H1 (cell line): ENCODE measurements at regions of chr12 and their contacts with region 1.

Region 1: GRCh38 chr12:120429368-120429767 is 8.5 kb upstream of the COX6A1 start:
- DNase-seq: no peak
- H3K4me3 ChIP-seq: no peak overlapping the region
- H3K27ac ChIP-seq: no peak overlapping the region
- H3K4me1 ChIP-seq: peaks cover 0 to 6% (median 0%) of the 10 kb centered on the region in 4 experiments; a peak in 1 of 7 replicates
- H3K27me3 ChIP-seq: no peaks in the 10 kb centered on the region
- CTCF ChIP-seq: no peak
- EP300 ChIP-seq: no peak
- POLR2A ChIP-seq: no peak
- RAD21 ChIP-seq: no peak

Region 2: GRCh38 chr12:120265473-120266179 is 163.7 kb before region 1 on chr12 and contains the start of gene PXN:
- CTCF ChIA-PET with region 1: interaction called, 10 read pairs
- POLR2A ChIA-PET with region 1: no interaction called
- DNase-seq: peak in 1 of 2 experiments; percentile 97
- H3K4me3 ChIP-seq: peak within 1 kb of the TSS; percentile 65 to 85 (median 80)
- H3K27ac ChIP-seq: peak within 1 kb of the TSS; percentile 83
- H3K4me1 ChIP-seq: peaks cover 15 to 29% (median 19%) of the 10 kb centered on the region in 4 experiments
- H3K27me3 ChIP-seq: no peaks in the 10 kb centered on the region
- CTCF ChIP-seq: peak; percentile 79 to 91 (median 91)
- EP300 ChIP-seq: no peak
- POLR2A ChIP-seq: peak in 1 of 2 experiments; percentile 70; a peak in 2 of 3 replicates
- RAD21 ChIP-seq: peak; percentile 87 to 91
- total RNA-seq, gene PXN: 105 and 109 TPM in 2 replicates

Region 3: DNA sequence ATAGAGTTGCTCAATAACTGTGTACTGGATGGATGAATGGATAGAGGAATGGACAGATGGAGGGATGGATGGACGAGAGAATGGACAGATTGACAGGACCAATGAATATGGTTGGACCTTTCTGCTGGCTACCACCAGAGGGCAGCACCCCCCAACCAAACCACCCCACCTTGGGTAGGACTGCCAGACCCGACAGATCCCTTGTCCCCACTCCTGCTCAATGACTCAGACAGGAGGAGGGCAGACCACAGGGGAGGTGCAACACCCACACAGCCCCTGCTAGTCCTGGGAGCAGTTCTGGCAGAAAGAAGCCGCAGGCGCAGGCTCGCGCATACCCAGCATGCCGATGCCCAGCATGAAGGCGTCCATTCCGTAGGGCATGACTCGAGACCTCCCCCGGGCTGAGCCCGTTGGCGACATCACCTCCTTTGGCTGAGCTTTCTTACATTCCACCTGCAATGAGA is 72.8 kb before region 1 on chr12:
- CTCF ChIA-PET with region 1: interaction called, 310 read pairs
- POLR2A ChIA-PET with region 1: interaction called, 8 read pairs
- DNase-seq: peak; percentile 80 to 90
- H3K4me3 ChIP-seq: no peak overlapping the region
- H3K27ac ChIP-seq: no peak overlapping the region
- H3K4me1 ChIP-seq: peaks cover 8 to 16% (median 13%) of the 10 kb centered on the region in 4 experiments
- H3K27me3 ChIP-seq: no peaks in the 10 kb centered on the region
- CTCF ChIP-seq: peak; percentile 91 to 94 (median 93)
- EP300 ChIP-seq: no peak
- POLR2A ChIP-seq: no peak
- RAD21 ChIP-seq: peak; percentile 93 to 96

Region 4: GRCh38 chr12:120388691-120389481 is 40.5 kb before region 1 on chr12:
- CTCF ChIA-PET with region 1: interaction called, 31 read pairs
- POLR2A ChIA-PET with region 1: interaction called, 3 read pairs
- DNase-seq: peak; percentile 71 to 88
- H3K4me3 ChIP-seq: peak overlapping the region; percentile 7 to 42 (median 19); a peak in 5 of 8 replicates
- H3K27ac ChIP-seq: peak overlapping the region; percentile 53; the same call in 1 of the 2 replicates
- H3K4me1 ChIP-seq: peaks cover under 1 to 21% (median 9%) of the 10 kb centered on the region in 4 experiments
- H3K27me3 ChIP-seq: no peaks in the 10 kb centered on the region
- CTCF ChIP-seq: no peak
- EP300 ChIP-seq: peak in 1 of 2 experiments; percentile 43; a peak in 1 of 3 replicates
- POLR2A ChIP-seq: peak in 1 of 2 experiments; percentile 50; a peak in 2 of 3 replicates
- RAD21 ChIP-seq: no peak

Region 5: GRCh38 chr12:120402217-120402616 is 27.2 kb before region 1 on chr12:
- CTCF ChIA-PET with region 1: interaction called, 31 read pairs
- POLR2A ChIA-PET with region 1: no interaction called
- DNase-seq: peak in 1 of 2 experiments; percentile 59
- H3K4me3 ChIP-seq: peak overlapping the region in 1 of 4 experiments; percentile 27; a peak in 1 of 8 replicates
- H3K27ac ChIP-seq: no peak overlapping the region
- H3K4me1 ChIP-seq: peaks cover 1 to 13% (median 6%) of the 10 kb centered on the region in 4 experiments
- H3K27me3 ChIP-seq: no peaks in the 10 kb centered on the region
- CTCF ChIP-seq: no peak
- EP300 ChIP-seq: no peak
- POLR2A ChIP-seq: no peak
- RAD21 ChIP-seq: no peak

Region 6: DNA sequence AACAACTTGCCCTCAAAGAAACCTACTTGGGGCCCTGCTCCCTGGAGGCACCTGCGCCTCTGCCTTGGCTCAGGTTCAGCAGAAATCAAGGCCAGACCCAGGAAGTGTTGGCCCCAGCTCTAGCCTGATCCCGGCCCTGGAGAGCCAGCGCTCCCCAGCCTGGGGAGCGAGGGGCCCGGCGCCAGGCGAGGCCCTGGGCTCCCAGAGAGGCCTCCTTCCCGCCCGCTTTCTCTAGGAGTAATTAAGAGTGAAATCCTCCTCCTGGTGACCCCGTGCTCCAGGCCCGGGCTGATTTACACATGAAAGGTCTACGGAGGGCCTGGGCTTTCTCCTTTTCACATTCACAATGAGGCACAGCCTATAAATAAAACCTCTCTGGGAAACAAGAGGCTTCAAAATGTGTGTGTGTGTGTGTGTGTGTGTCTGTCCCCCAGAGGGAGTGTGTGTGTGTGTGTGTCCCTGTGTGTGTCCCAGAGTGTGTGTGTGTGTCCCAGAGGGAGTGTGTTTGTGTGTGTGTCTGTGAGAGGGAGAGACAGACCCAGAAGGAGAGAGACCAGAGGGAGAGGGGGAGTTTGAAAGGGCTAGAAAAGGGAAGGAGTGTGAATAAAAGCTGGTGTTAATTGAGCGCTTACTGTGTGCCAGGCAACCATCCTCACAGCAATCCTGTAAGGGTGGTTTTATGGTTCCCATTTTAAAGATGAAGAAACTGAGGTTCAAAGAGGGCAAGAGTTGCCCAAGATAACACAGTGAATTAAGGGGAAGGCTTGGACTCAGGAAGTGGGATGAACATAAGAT is 15.3 kb before region 1 on chr12:
- CTCF ChIA-PET with region 1: interaction called, 30 read pairs
- POLR2A ChIA-PET with region 1: interaction called, 9 read pairs
- DNase-seq: peak; percentile 80 to 89
- H3K4me3 ChIP-seq: peak overlapping the region in 3 of 4 experiments; percentile 6 to 36 (median 23); a peak in 4 of 8 replicates
- H3K27ac ChIP-seq: peak overlapping the region; percentile 70; the same call in 1 of the 2 replicates
- H3K4me1 ChIP-seq: peaks cover 0 to 10% (median 6%) of the 10 kb centered on the region in 4 experiments; a peak in 3 of 7 replicates
- H3K27me3 ChIP-seq: no peaks in the 10 kb centered on the region
- CTCF ChIP-seq: no peak
- EP300 ChIP-seq: no peak; a peak in 1 of 3 replicates
- POLR2A ChIP-seq: peak; percentile 51 to 80
- RAD21 ChIP-seq: peak; percentile 1 to 14; a peak in 2 of 4 replicates

Region 7: GRCh38 chr12:120453977-120454376 is 24.6 kb after region 1 on chr12:
- CTCF ChIA-PET with region 1: interaction called, 12 read pairs
- POLR2A ChIA-PET with region 1: no interaction called
- DNase-seq: no peak
- H3K4me3 ChIP-seq: no peak overlapping the region
- H3K27ac ChIP-seq: no peak overlapping the region
- H3K4me1 ChIP-seq: no peaks in the 10 kb centered on the region; a peak in 1 of 7 replicates
- H3K27me3 ChIP-seq: no peaks in the 10 kb centered on the region
- CTCF ChIP-seq: peak in 2 of 3 experiments; percentile 47 to 71; a peak in 3 of 4 replicates
- EP300 ChIP-seq: no peak
- POLR2A ChIP-seq: no peak
- RAD21 ChIP-seq: peak; percentile 42 to 52

Region 8: DNA sequence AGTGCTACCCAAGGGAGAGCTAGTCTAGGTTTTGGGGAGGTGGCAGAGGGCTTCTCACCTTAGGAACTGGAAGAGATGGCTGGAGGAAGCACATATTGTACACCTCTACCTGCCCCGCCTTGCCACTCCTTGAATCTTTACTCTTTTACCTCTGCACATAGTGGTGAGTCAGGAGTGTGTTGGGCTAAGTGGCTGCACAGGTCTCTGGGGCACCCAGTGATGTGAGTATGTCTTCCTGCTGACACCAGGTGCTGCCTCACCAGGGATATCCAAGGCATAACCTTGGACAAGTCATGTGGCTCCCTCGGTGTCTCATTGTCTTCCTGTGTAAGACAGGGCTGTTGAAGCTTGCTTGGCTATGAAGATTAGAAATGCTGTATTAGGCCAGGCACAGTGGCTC is 191.3 kb after region 1 on chr12:
- CTCF ChIA-PET with region 1: no interaction called
- POLR2A ChIA-PET with region 1: no interaction called
- DNase-seq: no peak
- H3K4me3 ChIP-seq: no peak overlapping the region
- H3K27ac ChIP-seq: no peak overlapping the region
- H3K4me1 ChIP-seq: peaks cover 0 to 4% (median 4%) of the 10 kb centered on the region in 4 experiments; a peak in 4 of 7 replicates
- H3K27me3 ChIP-seq: peaks cover 0 to 3% (median 0%) of the 10 kb centered on the region in 4 experiments; a peak in 1 of 7 replicates
- CTCF ChIP-seq: no peak
- EP300 ChIP-seq: no peak
- POLR2A ChIP-seq: no peak
- RAD21 ChIP-seq: no peak

Region 9: DNA sequence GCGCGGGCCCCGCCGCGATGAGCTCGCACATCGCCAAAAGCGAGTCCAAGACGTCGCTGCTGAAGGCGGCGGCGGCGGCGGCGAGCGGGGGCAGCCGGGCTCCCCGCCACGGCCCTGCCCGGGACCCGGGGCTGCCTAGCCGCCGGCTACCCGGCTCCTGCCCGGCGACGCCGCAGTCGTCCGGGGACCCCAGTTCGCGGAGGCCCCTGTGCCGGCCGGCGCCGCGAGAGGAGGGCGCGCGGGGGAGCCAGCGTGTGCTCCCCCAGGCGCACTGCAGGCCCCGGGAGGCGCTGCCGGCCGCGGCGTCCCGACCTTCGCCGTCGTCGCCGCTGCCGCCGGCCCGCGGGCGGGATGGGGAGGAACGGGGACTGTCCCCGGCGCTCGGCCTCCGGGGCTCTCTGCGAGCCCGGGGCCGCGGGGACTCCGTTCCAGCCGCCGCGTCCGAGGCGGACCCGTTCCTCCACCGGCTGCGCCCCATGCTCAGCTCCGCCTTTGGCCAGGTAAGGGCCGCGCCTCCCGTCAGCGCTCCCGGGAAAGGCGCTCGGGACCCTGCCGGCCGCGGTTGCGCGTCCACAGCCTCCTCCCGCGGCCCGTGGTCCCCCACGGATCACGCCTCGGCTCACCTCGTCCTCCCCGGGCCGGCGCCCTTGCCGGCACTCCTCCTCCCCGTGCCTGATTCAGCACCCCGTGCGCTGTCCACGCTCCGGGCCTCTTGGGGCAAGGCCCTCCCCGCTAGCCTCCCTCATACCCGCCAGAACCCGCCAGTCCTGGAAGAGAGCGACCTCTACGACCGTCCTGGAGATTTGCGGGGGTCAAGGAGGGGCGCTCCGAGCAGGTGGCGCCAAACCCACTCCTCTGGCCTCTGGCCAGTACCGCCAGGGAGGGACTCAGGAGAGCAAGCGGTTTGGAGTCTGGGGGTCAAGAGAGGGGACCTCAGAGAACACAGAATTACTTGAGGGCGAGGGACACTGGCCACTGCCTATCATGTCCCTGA is 211.8 kb after region 1 on chr12:
- CTCF ChIA-PET with region 1: no interaction called
- POLR2A ChIA-PET with region 1: no interaction called
- DNase-seq: peak; percentile 53 to 88
- H3K4me3 ChIP-seq: peak overlapping the region; percentile 50 to 78 (median 57)
- H3K27ac ChIP-seq: no peak overlapping the region
- H3K4me1 ChIP-seq: peaks cover 0 to 11% (median 8%) of the 10 kb centered on the region in 4 experiments; a peak in 5 of 7 replicates
- H3K27me3 ChIP-seq: peaks cover 0 to 16% (median 12%) of the 10 kb centered on the region in 4 experiments; a peak in 4 of 7 replicates
- CTCF ChIP-seq: peak; percentile 36 to 56 (median 37)
- EP300 ChIP-seq: no peak
- POLR2A ChIP-seq: no peak
- RAD21 ChIP-seq: peak; percentile 35 to 46